Naive thymus-derived CD4-positive, alpha-beta T cell (primary cell): ENCODE measurements at regions of chr14 and their contacts with region 1.

Region 1: GRCh38 chr14:22221508-22221907 is 367.5 kb downstream of the DAD1 start:
- DNase-seq: peak in 5 of 9 donors; percentile 5 to 29 (median 20)
- ATAC-seq: no peak
- H3K4me3 ChIP-seq: no peak overlapping the region
- H3K4me3 Mint-ChIP-seq: peak overlapping the region; percentile 25 to 73 (median 52)
- H3K27ac ChIP-seq: no peak overlapping the region
- H3K27ac Mint-ChIP-seq: peak overlapping the region in 6 of 9 donors; percentile 4 to 72 (median 52)
- H3K4me1 ChIP-seq: no peaks in the 10 kb centered on the region
- H3K4me1 Mint-ChIP-seq: peaks cover 0 to 13% (median 7%) of the 10 kb centered on the region in 7 donors
- H3K27me3 ChIP-seq: no peaks in the 10 kb centered on the region
- H3K27me3 Mint-ChIP-seq: no peaks in the 10 kb centered on the region

Region 2: DNA sequence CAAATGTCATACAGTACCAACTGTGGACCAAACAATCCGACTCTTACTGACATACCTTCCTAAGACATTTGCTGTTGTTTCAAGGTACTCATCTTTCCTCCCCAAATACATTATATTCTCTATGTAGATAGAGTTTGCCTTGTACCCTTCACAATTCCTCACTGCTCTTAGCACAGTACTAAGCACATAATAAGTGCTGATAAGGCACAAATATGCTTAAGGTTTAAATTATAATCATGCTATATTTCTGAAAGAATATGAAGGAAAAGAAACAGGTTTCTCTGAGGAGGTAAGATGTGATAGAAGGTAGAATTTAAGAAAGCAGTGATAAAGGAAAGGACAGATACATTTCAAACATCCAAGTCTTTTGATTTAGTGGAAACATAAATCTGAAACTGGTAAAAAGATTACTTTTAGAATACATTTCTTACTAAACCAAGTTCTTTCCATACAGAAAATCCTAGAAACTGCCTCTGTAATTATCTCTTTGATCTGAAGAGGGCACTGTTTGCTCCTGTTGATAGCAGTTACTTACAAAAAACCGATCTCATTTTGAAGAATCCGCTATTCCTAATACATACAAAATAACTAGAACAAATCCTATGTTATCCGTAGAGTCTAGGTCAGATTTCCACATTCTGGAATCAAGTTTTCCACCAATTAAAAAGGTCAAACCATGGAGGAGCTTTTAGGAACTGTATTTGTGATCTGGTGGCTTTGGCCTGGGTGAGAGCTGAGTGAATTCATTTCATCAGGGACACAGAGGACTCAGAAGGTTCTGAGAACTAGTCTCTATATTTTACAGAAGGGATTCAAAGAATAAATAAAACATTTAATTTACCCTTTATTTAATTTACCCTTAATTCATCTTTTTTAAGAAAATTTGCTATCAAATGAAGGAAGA is 55.7 kb after region 1 on chr14:
- CTCF ChIA-PET with region 1: no interaction called
- POLR2A ChIA-PET with region 1: interaction called, 5 read pairs
- intact Hi-C with region 1: loop called (anchors 5 kb)
- DNase-seq: no peak
- ATAC-seq: no peak
- H3K4me3 ChIP-seq: no peak overlapping the region
- H3K4me3 Mint-ChIP-seq: peak overlapping the region in 2 of 10 donors; percentile 40 to 61
- H3K27ac ChIP-seq: no peak overlapping the region
- H3K27ac Mint-ChIP-seq: peak overlapping the region in 2 of 9 donors; percentile 21 to 53
- H3K4me1 ChIP-seq: no peaks in the 10 kb centered on the region
- H3K4me1 Mint-ChIP-seq: peaks cover 0 to 6% (median 0%) of the 10 kb centered on the region in 7 donors
- H3K27me3 ChIP-seq: no peaks in the 10 kb centered on the region
- H3K27me3 Mint-ChIP-seq: no peaks in the 10 kb centered on the region